CD8-positive, alpha-beta T cell (primary cell): ENCODE measurements at regions of chr15 and their contacts with region 1.

Region 1: DNA sequence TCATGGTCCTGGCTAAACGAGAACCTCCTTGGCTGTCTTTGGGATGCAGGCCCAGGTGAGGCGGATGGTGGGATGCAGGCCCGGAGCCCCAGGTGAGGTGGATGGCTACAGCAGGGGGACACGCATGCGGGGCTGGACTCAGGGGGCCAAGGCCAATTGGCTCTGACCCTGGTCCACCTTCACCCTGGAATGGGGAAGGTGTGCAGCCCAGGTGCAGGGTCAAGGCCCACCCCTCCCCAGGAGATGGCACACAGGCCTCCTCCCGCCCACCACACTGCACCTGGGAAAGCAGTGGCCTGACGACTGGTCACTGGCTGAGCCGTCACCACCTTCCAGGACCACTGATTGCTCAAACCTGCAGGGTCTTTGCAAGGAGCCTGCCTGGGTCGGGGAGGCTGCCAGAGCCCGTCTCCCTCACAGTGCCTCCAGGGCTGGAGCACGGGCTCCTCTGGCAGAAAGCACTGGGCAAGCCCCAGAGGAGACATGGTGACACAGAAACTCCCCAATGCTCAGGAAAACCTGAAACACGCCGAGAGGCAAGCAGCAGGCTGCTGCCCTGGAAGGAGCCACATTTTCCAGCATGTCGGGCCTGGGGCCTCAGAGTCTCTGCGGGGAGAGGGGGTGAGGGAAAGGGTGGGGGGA is 159.6 kb downstream of the LRRK1 start:
- DNase-seq: no peak
- ATAC-seq: no peak
- H3K4me3 ChIP-seq: no peak overlapping the region
- H3K4me3 Mint-ChIP-seq: no peak overlapping the region
- H3K27ac ChIP-seq: no peak overlapping the region
- H3K27ac Mint-ChIP-seq: no peak overlapping the region
- H3K4me1 ChIP-seq: no peaks in the 10 kb centered on the region
- H3K4me1 Mint-ChIP-seq: no peaks in the 10 kb centered on the region
- H3K27me3 ChIP-seq: no peaks in the 10 kb centered on the region
- H3K27me3 Mint-ChIP-seq: no peaks in the 10 kb centered on the region
- CTCF ChIP-seq: no peak

Region 2: GRCh38 chr15:100438570-100438969 is 640.2 kb before region 1 on chr15:
- CTCF ChIA-PET with region 1: no interaction called
- POLR2A ChIA-PET with region 1: no interaction called
- intact Hi-C with region 1: loop called in 1 of 2 experiments (anchors 5 kb)
- DNase-seq: peak in 7 of 9 experiments; percentile 7 to 52 (median 27)
- ATAC-seq: no peak
- H3K4me3 ChIP-seq: no peak overlapping the region
- H3K4me3 Mint-ChIP-seq: no peak overlapping the region
- H3K27ac ChIP-seq: no peak overlapping the region
- H3K27ac Mint-ChIP-seq: no peak overlapping the region
- H3K4me1 ChIP-seq: no peaks in the 10 kb centered on the region
- H3K4me1 Mint-ChIP-seq: peaks cover 5% of the 10 kb centered on the region
- H3K27me3 ChIP-seq: no peaks in the 10 kb centered on the region
- H3K27me3 Mint-ChIP-seq: peaks cover 2% of the 10 kb centered on the region
- CTCF ChIP-seq: no peak

Region 3: GRCh38 chr15:100973351-100974111 is 105.3 kb before region 1 on chr15:
- CTCF ChIA-PET with region 1: no interaction called
- POLR2A ChIA-PET with region 1: no interaction called
- intact Hi-C with region 1: no loop called
- DNase-seq: no peak
- ATAC-seq: no peak
- H3K4me3 ChIP-seq: no peak overlapping the region
- H3K4me3 Mint-ChIP-seq: no peak overlapping the region
- H3K27ac ChIP-seq: no peak overlapping the region
- H3K27ac Mint-ChIP-seq: no peak overlapping the region
- H3K4me1 ChIP-seq: no peaks in the 10 kb centered on the region
- H3K4me1 Mint-ChIP-seq: peaks cover 3% of the 10 kb centered on the region
- H3K27me3 ChIP-seq: peaks cover 7 to 20% of the 10 kb centered on the region in 2 experiments
- H3K27me3 Mint-ChIP-seq: peaks cover 54% of the 10 kb centered on the region
- CTCF ChIP-seq: no peak